AG04449 (cell line): ENCODE measurements at regions of chr14 and their contacts with region 1.

Region 1: GRCh38 chr14:50599700-50600444 is 39.9 kb downstream of the ATL1 start:
- DNase-seq: no peak
- H3K4me3 ChIP-seq: no peak overlapping the region
- CTCF ChIP-seq: peak; percentile 45

Region 2: GRCh38 chr14:50215400-50215799 is 384.5 kb before region 1 on chr14:
- CTCF ChIA-PET with region 1: no interaction called
- POLR2A ChIA-PET with region 1: no interaction called
- DNase-seq: no peak
- H3K4me3 ChIP-seq: no peak overlapping the region
- CTCF ChIP-seq: no peak

Region 3: DNA sequence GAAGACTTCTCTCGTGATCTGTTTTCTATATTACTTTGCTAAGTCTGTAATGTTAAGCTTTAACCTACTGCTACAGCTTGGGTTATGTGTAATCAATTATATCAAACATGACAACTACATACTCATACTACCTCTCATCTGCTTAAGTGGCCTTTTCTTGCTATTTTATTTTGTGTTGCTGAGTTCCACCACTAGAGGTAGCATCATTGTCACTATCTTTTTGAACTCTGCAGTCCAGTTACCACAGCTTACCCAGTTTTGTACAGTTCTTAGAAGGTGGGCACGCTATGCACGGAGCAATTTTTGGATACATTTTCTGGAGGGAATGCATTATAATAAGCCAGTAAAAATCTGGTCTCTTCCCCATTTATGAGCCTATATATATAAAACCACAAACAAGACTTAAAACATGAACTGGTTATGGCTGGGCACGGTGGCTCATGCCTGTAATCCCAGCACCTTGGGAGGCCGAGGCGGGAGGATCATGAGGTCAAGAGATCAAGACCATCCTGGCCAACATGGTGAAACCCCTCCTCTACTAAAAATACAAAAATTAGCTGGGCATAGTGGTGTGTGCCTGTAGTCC is 19.8 kb after region 1 on chr14:
- CTCF ChIA-PET with region 1: interaction called, 14 read pairs
- POLR2A ChIA-PET with region 1: no interaction called
- DNase-seq: no peak
- H3K4me3 ChIP-seq: no peak overlapping the region
- CTCF ChIP-seq: peak; percentile 58

Region 4: DNA sequence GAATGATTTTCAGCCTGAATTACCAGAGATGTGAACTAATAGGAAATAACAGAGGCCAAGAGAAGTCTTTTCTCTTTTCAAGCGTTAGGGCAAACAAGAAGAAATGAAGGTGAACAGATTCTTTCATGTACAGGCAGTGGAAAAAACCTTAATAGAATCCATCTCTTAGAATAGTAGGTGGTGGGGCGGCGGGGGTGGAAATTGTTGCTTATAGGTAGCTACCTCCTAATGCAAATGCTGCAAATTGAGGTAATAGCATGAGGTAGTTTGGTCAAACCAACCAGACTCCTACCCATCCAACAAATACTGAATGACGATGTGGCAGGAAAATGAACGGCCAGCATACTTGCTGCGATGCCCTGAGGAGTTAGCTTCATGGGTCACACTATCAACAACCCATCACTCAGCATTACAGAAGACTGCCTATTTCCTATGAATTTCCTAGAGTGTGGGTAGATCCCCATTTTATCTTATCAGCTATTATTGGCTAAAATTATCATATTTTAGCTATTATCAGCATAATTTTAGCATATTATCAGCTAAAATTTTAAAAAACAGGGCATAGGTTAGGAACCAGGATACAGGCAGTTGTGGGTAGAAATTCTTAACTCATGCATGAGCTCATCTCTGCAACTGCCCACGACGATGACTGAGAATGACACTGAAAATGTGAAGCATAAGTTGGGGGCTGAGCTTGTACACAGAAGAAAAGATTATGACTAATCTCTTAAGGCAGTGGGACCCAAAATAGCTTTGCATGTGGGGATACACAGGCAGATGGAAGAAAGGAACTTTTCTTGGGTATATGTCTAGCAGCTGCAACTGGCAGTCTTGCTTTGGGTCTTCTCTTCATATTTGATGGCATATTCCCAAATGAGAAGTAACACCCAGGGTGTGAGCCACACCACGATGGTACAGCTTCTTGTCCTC is 162.4 kb after region 1 on chr14:
- CTCF ChIA-PET with region 1: interaction called, 25 read pairs
- POLR2A ChIA-PET with region 1: no interaction called
- DNase-seq: peak; percentile 64
- H3K4me3 ChIP-seq: no peak overlapping the region
- CTCF ChIP-seq: no peak

Region 5: DNA sequence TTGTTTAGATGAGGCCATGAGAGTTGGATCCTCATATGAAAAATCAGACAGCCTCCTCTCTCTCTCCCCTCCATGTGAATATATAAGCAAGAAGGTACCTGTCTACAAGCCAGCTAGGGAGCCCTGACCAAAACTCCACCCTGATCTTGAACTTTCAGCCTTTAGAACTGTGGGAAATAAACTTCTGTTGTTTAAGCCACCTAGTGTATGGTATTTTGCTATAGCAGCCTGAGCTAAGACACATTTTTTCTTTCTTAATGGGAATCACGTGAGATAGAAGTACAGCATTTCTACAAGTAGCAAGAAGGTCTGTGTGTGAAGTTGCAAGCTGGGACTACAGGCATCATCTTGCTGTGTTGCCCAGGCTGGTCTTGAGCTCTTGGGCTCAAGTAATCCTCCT is 255.7 kb after region 1 on chr14:
- CTCF ChIA-PET with region 1: interaction called, 40 read pairs
- POLR2A ChIA-PET with region 1: no interaction called
- DNase-seq: no peak
- H3K4me3 ChIP-seq: no peak overlapping the region
- CTCF ChIP-seq: no peak